Kidney (tissue), 22 donors: ENCODE measurements at regions of chr19 and their contacts with region 1.

Region 1: GRCh38 chr19:17282488-17283255 is 971 bp downstream of the ANKLE1 start:
- DNase-seq: peak; percentile 90 to 93 (median 92)
- H3K4me3 ChIP-seq: peak overlapping the region in 1 of 3 donors; percentile 18
- H3K27ac ChIP-seq: no peak overlapping the region
- H3K4me1 ChIP-seq: peaks cover 0 to 4% (median 0%) of the 10 kb centered on the region in 3 donors
- H3K27me3 ChIP-seq: peaks cover 2% of the 10 kb centered on the region
- CTCF ChIP-seq: peak; percentile 88

Region 2: DNA sequence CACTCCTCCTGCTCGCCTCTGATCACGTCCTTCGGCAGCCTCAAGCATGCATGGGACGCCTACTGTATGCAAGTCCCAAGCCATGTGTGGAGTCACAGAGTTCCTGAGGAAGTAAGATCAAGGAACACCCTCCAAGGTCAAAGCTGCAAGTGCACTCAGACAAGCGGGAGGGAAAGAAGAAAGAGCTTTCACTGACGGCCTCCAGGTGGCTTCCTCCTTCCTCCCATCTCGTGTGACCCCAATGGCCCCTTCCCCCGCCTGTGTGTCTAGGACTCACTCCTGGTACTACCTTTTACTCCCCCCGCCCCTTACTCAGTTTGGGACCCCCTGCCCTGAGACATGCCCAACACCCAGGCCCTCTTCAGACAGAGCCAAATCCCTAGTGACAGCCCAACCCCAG is 213.5 kb before region 1 on chr19:
- intact Hi-C with region 1: loop called (anchors 10 kb)
- DNase-seq: no peak
- H3K4me3 ChIP-seq: no peak overlapping the region
- H3K27ac ChIP-seq: no peak overlapping the region
- H3K4me1 ChIP-seq: peaks cover 0 to 2% (median under 1%) of the 10 kb centered on the region in 3 donors
- H3K27me3 ChIP-seq: no peaks in the 10 kb centered on the region
- CTCF ChIP-seq: no peak

Region 3: GRCh38 chr19:17327651-17328516 is 45.2 kb after region 1 on chr19:
- intact Hi-C with region 1: no loop called
- DNase-seq: peak in 4 of 5 donors; percentile 89 to 93 (median 92)
- H3K4me3 ChIP-seq: peak overlapping the region in 1 of 3 donors; percentile 25
- H3K27ac ChIP-seq: no peak overlapping the region
- H3K4me1 ChIP-seq: no peaks in the 10 kb centered on the region
- H3K27me3 ChIP-seq: no peaks in the 10 kb centered on the region
- CTCF ChIP-seq: peak; percentile 24